AG04449 (cell line): ENCODE measurements at regions of chr4 and their contacts with region 1.

Region 1: DNA sequence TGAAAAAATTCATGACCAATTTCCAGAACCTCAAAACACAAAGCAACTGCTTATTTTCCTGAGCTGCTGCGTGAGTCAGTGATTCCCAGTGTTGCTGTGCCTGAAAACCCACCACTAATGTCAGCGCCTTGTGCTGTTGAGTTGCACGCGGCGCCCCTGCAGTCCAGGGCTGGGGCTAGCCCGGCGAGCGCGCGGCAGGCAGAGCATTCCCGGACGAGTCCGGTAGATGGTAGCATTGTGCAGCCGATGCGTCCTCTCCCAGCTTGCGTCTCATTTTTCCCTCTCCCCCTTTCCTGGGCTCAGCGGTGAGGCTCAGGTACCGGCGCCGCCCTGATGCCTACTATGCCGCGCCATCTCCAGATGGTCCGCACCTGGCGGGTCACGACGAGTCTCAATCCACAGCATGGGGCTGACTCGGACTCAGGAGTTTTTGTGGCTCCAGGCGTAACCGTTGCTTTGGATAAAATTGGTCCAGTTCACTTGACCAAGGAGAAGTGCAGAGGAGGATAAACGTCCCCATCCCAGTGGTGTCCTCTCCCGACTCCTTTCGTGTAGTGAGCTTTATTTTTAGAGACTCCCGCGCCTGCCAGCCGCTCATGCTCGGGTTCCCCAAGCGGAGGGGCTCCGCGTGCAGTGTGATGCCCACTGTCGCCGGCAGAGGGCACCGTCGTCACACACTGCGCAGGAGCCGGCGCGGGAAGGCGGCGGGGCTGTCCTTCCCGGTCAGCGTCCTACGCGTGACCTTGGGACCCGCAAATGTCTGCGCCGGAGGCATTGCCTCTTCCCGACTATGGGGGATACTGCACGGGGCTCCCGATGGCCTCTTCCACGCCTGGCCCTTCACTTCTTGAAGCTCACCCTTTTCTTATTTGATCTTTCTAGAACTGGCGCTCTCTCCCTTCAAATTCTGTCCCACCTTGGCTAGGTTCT is 53.6 kb upstream of the IGFBP7 start:
- DNase-seq: no peak
- H3K4me3 ChIP-seq: peak overlapping the region; percentile 77
- CTCF ChIP-seq: peak; percentile 99

Region 2: DNA sequence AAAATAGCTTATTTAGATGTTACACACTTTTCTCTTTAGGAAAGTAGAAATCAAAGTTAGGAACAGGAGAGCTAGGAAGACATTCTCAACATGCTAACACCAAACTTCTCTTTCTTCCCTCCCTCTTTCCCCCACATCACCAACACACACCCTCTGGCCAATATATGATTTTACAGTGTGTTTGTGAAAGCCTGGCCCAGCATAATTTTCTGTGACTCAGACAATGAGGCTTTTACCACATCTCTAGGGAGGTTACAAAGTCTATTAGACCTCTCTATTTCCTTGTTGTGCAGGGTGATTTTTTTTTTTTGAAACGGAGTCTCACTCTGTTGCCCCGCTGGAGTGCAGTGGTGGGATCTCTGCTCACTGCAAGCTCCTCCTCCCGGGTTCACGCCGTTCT is 966.4 kb before region 1 on chr4:
- CTCF ChIA-PET with region 1: no interaction called
- POLR2A ChIA-PET with region 1: no interaction called
- DNase-seq: no peak
- H3K4me3 ChIP-seq: no peak overlapping the region
- CTCF ChIP-seq: no peak

Region 3: GRCh38 chr4:57051095-57051494 is 112.7 kb before region 1 on chr4:
- CTCF ChIA-PET with region 1: interaction called, 20 read pairs
- POLR2A ChIA-PET with region 1: no interaction called
- DNase-seq: no peak
- H3K4me3 ChIP-seq: no peak overlapping the region
- CTCF ChIP-seq: no peak

Region 4: GRCh38 chr4:57080781-57081650 is 82.8 kb before region 1 on chr4:
- CTCF ChIA-PET with region 1: interaction called, 23 read pairs
- POLR2A ChIA-PET with region 1: interaction called, 4 read pairs
- DNase-seq: peak; percentile 99
- H3K4me3 ChIP-seq: no peak overlapping the region
- CTCF ChIP-seq: no peak

Region 5: DNA sequence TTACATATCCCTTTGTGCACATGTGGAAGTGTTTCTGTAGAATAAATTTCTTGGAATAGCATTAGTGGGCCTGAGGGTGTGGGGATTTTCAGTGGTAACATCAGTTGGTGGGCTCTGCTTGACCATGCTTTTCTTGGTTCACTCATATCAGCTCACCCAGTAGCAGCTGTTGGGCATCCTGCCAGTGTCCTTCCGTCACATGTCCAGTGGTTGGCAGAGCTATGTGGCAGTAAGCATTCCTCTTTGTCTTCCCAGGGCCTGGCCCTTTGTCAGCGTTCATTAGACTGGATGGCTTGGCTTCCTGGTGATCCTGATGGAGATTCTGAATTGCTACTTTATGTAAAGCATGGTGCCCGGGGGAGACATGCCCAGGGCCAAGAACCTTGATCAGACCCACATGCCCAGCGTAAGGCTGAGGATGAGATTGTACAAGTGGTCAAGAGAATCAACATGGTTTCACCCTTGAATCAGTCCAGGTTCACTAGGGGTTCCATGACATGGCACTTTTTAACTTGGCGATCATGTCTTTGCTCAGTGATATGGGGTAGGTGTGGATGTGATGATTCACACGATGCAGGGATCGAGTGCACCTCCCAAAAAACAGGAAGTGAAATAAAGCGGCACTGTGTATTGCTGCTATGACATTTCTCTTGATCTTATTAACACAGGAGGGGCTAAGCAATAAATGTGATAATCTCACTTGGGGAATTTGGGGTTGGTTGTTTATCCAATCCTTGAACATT is 18.5 kb after region 1 on chr4:
- CTCF ChIA-PET with region 1: interaction called, 66 read pairs
- POLR2A ChIA-PET with region 1: no interaction called
- DNase-seq: no peak
- H3K4me3 ChIP-seq: no peak overlapping the region
- CTCF ChIP-seq: no peak

Region 6: DNA sequence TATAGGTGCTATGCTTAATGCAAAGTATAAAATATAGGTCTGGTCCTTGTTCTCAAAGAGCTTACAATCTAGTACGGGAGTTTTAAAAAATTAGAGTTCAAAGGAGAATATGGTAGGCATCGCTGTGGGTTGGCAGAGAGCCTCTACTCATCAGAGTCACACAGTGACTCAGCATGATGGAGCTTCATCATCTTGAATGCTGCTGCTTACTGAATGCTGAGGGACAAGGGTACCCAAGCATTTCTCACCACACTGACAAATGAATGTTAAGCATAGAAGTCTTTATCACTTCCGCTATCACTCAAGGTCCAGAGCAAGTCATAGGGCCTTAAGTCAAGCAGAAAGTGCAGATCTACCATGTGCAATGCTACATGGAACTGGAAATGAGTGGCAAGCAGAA is 215.0 kb after region 1 on chr4:
- CTCF ChIA-PET with region 1: interaction called, 12 read pairs
- POLR2A ChIA-PET with region 1: no interaction called
- DNase-seq: no peak
- H3K4me3 ChIP-seq: no peak overlapping the region
- CTCF ChIP-seq: no peak

Region 7: DNA sequence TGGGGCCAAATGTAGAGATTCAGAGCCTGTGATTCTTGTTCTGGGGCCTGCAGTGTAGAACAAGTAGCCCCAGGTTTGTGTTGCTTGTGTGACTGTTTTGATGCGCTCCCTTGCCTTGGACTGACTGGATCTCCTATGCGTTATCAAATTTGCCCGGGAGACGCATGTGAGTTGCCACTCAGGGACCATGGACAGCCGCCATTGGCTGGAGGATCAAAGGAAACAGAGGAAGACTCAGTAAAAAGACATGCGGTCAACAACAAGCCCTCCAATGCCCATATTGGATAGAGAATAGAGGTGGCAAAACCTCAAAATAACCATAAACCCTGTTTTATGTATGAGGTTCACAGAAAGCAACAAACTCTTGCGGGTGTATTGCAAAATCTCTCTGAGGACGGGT is 273.9 kb after region 1 on chr4:
- CTCF ChIA-PET with region 1: interaction called, 49 read pairs
- POLR2A ChIA-PET with region 1: no interaction called
- DNase-seq: no peak
- H3K4me3 ChIP-seq: no peak overlapping the region
- CTCF ChIP-seq: no peak

Region 8: GRCh38 chr4:57550198-57550597 is 386.4 kb after region 1 on chr4:
- CTCF ChIA-PET with region 1: no interaction called
- POLR2A ChIA-PET with region 1: no interaction called
- DNase-seq: no peak
- H3K4me3 ChIP-seq: no peak overlapping the region
- CTCF ChIP-seq: no peak